Endothelial cell of umbilical vein (primary cell): ENCODE measurements at regions of chr1 and their contacts with region 1.

Region 1: DNA sequence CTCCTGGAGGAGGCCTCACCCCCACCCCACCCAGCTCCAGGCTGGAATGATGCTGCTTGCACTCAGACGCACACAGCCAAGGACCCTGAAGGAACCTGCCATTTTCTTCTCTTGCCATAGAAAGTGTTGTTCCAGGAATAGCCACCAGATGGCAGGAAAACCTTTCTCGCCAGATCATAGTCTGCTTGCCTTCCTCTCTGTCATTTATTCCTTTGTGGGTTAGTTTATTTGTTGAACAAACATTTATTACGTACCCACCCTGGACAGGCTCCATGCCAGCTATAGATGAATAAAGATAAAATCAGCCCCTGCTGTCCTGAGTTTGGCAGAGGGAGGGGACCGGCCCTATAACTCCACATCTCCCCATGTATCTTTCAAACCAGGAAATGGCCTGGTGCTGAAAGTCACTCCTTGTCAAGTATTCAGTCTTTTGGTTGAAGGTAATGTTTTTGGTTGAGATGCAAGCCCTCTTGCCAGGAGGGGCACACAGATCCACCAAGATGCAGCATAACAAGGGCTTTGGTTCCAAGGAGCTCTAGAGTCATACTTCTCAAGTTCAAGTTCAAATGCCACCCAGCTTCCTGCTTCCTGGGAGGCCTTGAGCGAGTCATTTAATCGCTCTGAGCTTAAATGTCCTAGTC is 7.0 kb upstream of the KCNC4 start:
- DNase-seq: peak; percentile 72
- H3K4me3 ChIP-seq: no peak overlapping the region
- H3K27ac ChIP-seq: no peak overlapping the region
- H3K4me1 ChIP-seq: peaks cover 4% of the 10 kb centered on the region
- H3K27me3 ChIP-seq: no peaks in the 10 kb centered on the region
- CTCF ChIP-seq: peak; percentile 67 to 76
- POLR2A ChIP-seq: no peak

Region 2: GRCh38 chr1:110136911-110137310 is 66.2 kb before region 1 on chr1:
- CTCF ChIA-PET with region 1: no interaction called
- POLR2A ChIA-PET with region 1: no interaction called
- dilution Hi-C with region 1: no loop called
- intact Hi-C with region 1: no loop called
- DNase-seq: no peak
- H3K4me3 ChIP-seq: no peak overlapping the region
- H3K27ac ChIP-seq: no peak overlapping the region
- H3K4me1 ChIP-seq: no peaks in the 10 kb centered on the region
- H3K27me3 ChIP-seq: peaks cover 20 to 33% of the 10 kb centered on the region in 2 experiments
- CTCF ChIP-seq: no peak
- POLR2A ChIP-seq: no peak

Region 3: GRCh38 chr1:110407260-110408210 is 204.4 kb after region 1 on chr1 and contains the start of gene LAMTOR5:
- CTCF ChIA-PET with region 1: interaction called, 22 read pairs
- POLR2A ChIA-PET with region 1: no interaction called
- dilution Hi-C with region 1: no loop called
- intact Hi-C with region 1: loop called (anchors 1 kb)
- DNase-seq: peak; percentile 97
- H3K4me3 ChIP-seq: peak within 1 kb of the TSS; percentile 94 to 100 (median 95)
- H3K27ac ChIP-seq: peak within 1 kb of the TSS; percentile 69
- H3K4me1 ChIP-seq: peaks cover 9% of the 10 kb centered on the region
- H3K27me3 ChIP-seq: no peaks in the 10 kb centered on the region
- CTCF ChIP-seq: no peak
- POLR2A ChIP-seq: peak; percentile 92
- total RNA-seq, gene LAMTOR5: 137 and 150 TPM in 2 replicates

Region 4: DNA sequence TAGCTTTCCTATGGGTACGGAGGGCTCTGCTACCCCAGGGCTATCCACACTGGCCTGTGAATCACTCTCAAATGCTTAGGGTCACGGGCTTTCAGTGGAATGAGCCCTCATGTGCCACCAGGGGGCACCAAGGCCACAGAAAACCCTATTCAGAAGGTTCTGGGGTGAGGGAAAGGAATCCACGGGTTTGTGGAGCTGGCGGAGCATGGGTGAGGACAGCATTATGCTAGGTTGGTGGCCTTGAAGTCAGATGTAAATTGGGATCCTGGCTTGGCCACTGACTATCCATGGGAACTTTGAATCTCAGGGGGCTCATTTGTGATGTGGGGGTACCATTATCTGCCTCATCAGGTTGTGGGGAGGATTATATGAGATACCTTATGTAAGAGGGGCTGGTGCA is 209.4 kb after region 1 on chr1:
- CTCF ChIA-PET with region 1: interaction called, 22 read pairs
- POLR2A ChIA-PET with region 1: no interaction called
- dilution Hi-C with region 1: no loop called
- intact Hi-C with region 1: loop called (anchors 1 kb)
- DNase-seq: peak; percentile 53
- H3K4me3 ChIP-seq: no peak overlapping the region
- H3K27ac ChIP-seq: no peak overlapping the region
- H3K4me1 ChIP-seq: peaks cover 4% of the 10 kb centered on the region
- H3K27me3 ChIP-seq: peaks cover 7 to 8% of the 10 kb centered on the region in 2 experiments
- CTCF ChIP-seq: peak; percentile 74 to 76
- POLR2A ChIP-seq: no peak